ENCODE measurements at regions of chr15 and their contacts with region 1.

Region 1: DNA sequence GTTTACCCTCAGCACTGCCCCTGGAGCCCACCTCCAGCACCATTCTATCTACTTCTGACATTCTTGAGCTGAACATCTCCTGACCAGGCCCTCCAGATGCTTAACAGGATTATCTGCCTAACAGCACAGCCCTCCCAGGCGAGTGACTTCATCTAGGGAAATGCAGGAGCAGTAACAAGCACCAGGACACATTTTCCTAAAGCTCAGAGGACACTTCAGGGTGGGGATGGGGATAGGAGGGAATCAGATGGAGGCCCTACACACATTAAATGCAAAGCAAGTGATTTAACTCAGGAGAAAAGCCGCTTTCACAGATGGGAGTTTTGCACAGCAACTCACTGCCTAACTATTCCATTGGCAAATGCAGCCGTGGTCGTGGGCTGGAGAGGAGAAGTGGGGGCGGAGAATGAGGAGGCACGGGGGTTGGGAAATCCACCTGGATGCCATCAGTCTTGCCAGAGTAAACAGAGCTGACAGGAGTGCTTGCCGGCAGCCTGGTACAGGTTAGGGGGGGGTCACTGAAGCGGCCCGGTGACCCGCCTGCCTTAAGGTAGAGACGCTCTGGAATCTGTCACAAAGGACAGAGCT is 21.3 kb upstream of the BNC1 start:
- DNase-seq: peak; percentile 81 to 89
- H3K4me3 ChIP-seq: peak overlapping the region; percentile 41; the same call in 1 of the 2 replicates
- H3K27ac ChIP-seq: peak overlapping the region; percentile 98
- H3K4me1 ChIP-seq: peaks cover 63% of the 10 kb centered on the region
- H3K27me3 ChIP-seq: no peaks in the 10 kb centered on the region
- CTCF ChIP-seq: no peak

Region 2: DNA sequence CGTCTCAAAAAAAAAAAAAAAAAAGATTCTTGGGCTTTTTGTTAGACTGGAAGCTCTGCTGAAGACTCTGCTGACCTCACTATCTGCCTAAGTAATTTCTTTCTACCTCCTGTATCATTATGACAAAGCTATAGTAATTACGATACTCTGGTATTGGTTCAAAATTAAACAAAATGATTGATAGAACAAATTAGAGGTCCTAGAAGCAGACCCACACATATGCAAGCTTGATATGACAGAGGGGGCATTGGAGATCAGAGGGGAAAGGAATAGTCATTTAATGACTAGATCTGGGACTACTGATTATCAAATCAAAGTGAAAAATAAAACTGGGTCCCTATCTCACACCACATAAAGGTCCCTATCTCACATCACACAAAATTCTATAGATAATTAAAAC is 574.3 kb before region 1 on chr15:
- CTCF ChIA-PET with region 1: no interaction called
- POLR2A ChIA-PET with region 1: interaction called, 13 read pairs
- intact Hi-C with region 1: no loop called
- DNase-seq: no peak
- H3K4me3 ChIP-seq: no peak overlapping the region
- H3K27ac ChIP-seq: no peak overlapping the region
- H3K4me1 ChIP-seq: no peaks in the 10 kb centered on the region
- H3K27me3 ChIP-seq: no peaks in the 10 kb centered on the region
- CTCF ChIP-seq: no peak

Region 3: GRCh38 chr15:83365370-83365938 is 59.7 kb after region 1 on chr15:
- CTCF ChIA-PET with region 1: interaction called, 12 read pairs
- POLR2A ChIA-PET with region 1: no interaction called
- intact Hi-C with region 1: no loop called
- DNase-seq: peak in 1 of 2 experiments; percentile 21
- H3K4me3 ChIP-seq: peak overlapping the region; percentile 52
- H3K27ac ChIP-seq: no peak overlapping the region
- H3K4me1 ChIP-seq: peaks cover 20% of the 10 kb centered on the region; the same call in 1 of the 2 replicates
- H3K27me3 ChIP-seq: no peaks in the 10 kb centered on the region
- CTCF ChIP-seq: no peak

Region 4: DNA sequence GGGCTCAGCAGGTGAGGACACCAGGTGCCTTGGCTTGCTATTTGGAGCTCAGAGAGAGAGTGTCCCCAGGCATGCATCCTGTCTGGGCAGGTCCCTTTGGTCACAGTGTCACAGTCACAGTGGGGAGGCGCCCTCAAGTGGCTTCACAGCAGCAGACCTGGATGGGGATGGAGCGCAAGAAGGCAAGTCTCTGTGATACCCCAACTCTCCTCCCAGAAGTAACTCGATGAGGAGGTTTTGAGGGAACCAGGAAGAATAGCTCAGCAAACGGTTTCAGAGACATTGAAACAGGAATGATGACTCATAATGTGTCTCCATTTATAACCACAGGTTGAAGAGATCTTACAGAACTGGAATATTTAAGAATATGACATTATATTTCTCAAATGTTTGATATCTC is 74.9 kb after region 1 on chr15:
- CTCF ChIA-PET with region 1: interaction called, 9 read pairs
- POLR2A ChIA-PET with region 1: no interaction called
- intact Hi-C with region 1: loop called (anchors 1 kb)
- DNase-seq: peak; percentile 82 to 88
- H3K4me3 ChIP-seq: no peak overlapping the region
- H3K27ac ChIP-seq: peak overlapping the region; percentile 95
- H3K4me1 ChIP-seq: peaks cover 53% of the 10 kb centered on the region
- H3K27me3 ChIP-seq: no peaks in the 10 kb centered on the region
- CTCF ChIP-seq: peak; percentile 73

Measured in PC-9 (cell line).